HEK293 (cell line): ENCODE measurements at regions of chr10 and their contacts with region 1.

Region 1: GRCh38 chr10:106592396-106592795 is 572.1 kb downstream of the SORCS1 start:
- H3K4me3 ChIP-seq: no peak overlapping the region
- H3K27ac ChIP-seq: no peak overlapping the region
- H3K4me1 ChIP-seq: no peaks in the 10 kb centered on the region
- CTCF ChIP-seq: no peak

Region 2: GRCh38 chr10:106606554-106606910 is 14.1 kb after region 1 on chr10:
- CTCF ChIA-PET with region 1: interaction called, 3 read pairs
- POLR2A ChIA-PET with region 1: interaction called, 11 read pairs
- H3K4me3 ChIP-seq: no peak overlapping the region
- H3K27ac ChIP-seq: no peak overlapping the region
- H3K4me1 ChIP-seq: no peaks in the 10 kb centered on the region; the same call in 1 of the 2 replicates
- CTCF ChIP-seq: no peak

Region 3: DNA sequence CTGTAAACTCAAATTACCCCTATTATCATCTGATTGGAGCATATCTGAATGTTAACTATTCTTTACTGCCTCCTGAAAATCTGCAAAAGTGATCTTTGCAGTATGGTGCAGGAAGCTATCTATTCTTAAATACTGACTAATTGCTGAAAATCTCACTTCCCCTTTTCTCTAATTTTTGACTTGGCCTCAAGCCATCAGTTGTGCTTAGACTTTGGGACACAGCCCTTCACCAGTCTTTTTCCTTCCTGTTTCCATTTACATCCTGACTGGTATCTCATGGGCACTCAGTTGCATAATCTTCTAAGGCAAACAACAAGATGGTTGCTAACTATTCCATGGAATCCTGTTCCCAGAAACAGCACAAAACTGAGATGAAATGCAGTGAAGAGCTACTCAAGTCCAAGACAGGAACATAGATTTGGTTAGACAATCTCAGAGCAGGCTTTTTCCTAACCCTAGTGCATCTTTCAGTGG is 343.6 kb after region 1 on chr10:
- CTCF ChIA-PET with region 1: no interaction called
- POLR2A ChIA-PET with region 1: no interaction called
- H3K4me3 ChIP-seq: no peak overlapping the region
- H3K27ac ChIP-seq: no peak overlapping the region
- H3K4me1 ChIP-seq: peaks cover 20% of the 10 kb centered on the region
- CTCF ChIP-seq: no peak